Activated CD4-positive, alpha-beta memory T cell treated with anti-CD3 and anti-CD28 coated beads for 36 hours (primary cell): ENCODE measurements at regions of chrX and their contacts with region 1.

Region 1: DNA sequence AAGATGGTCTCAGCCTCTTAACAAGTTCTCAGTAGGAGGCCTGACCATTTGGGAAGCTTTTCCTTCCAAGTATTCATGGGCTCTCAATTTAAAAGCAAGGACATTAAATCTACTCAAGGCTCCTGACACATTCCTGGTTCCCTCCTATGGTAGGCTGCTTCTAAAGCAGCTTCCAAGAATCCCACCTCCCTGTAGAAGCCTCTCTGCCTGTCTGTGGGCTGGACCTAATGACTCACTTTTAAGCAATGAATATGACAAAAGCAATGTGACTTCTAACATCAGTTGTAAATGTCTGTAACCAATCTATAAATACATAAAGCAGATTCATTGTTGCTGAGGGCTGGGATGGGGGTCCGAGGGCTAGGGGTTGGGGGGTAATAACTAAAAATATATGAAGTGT is 99.5 kb upstream of the FAM9B start:
- DNase-seq: no peak
- H3K4me3 Mint-ChIP-seq: no peak overlapping the region
- H3K27ac Mint-ChIP-seq: no peak overlapping the region
- H3K4me1 Mint-ChIP-seq: peaks cover 30% of the 10 kb centered on the region
- H3K27me3 Mint-ChIP-seq: no peaks in the 10 kb centered on the region

Region 2: DNA sequence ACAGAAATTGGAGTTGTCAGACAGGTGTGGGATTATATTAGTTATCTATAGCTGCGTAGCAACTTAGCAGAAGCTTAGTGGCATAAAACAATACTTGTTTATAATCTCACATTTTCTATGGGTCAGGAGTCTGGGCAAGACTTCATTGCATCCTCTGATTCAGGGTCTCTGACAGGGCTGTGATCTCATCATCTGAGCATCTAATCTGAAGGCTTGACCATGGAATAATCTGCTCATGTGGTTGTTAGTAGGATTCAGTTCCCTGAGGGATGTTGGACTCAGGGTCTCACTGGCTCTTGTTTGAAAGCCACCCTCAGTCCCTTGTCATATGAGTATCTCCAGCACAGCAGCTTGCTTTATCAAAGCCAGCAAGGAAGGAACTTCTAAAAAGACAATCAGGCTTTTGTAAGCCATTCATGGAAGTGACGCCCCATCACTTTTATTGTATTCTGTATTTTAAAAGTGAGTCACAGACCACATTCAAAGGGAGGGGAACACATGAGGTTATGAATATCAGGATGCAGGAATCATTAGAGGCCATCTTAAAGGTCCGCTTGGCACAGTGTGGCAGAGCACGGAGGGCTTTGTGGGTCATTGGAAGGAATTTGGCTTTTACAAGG is 62.3 kb before region 1 on chrX:
- CTCF ChIA-PET with region 1: no interaction called
- POLR2A ChIA-PET with region 1: no interaction called
- intact Hi-C with region 1: loop called (anchors 10 kb)
- DNase-seq: no peak
- H3K4me3 Mint-ChIP-seq: no peak overlapping the region
- H3K27ac Mint-ChIP-seq: no peak overlapping the region
- H3K4me1 Mint-ChIP-seq: peaks cover 18% of the 10 kb centered on the region
- H3K27me3 Mint-ChIP-seq: peaks cover 2% of the 10 kb centered on the region

Region 3: DNA sequence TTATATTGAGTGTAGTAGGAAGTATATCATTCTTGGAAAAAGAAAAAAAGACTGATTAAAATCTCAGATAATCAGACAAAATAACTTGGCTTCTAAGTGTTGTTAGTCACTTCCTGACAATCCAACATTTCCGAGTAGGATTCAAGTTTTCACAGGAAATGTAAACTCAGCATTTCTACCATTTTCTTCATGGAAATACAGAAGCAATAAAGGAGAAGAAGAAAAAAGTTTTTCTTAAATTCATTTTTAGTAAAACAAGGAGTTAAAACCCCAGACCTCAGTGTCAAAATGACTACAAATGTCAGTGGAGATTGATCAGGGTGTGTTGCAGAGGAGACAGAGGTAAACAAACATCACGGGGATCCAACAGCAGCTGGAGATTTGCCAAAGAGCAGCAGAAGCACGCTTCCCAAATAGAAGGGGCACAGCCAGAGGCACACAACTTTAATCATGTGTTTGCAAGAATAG is 29.8 kb after region 1 on chrX:
- CTCF ChIA-PET with region 1: no interaction called
- POLR2A ChIA-PET with region 1: interaction called, 3 read pairs
- intact Hi-C with region 1: loop called (anchors 2 kb)
- DNase-seq: no peak
- H3K4me3 Mint-ChIP-seq: no peak overlapping the region
- H3K27ac Mint-ChIP-seq: peak overlapping the region; percentile 33
- H3K4me1 Mint-ChIP-seq: peaks cover 44% of the 10 kb centered on the region
- H3K27me3 Mint-ChIP-seq: no peaks in the 10 kb centered on the region

Region 4: DNA sequence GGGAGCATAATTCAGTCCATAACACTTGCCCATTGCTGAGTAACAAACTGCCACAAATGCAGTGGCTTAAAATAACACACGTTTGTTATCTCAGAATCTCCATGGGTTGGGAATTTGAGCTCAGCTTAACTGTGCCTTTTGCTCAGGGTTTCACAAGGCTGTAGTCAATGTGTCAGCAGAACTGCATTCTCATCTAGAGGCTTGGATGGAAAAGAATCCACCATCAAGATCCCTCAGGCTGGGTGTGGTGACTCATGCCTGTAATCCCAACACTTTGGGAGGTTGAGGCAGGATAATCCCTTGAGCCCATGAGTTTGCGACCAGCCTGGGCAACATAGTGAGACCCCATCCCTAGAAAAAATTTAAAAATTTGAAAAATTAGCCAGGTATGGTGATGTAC is 305.6 kb after region 1 on chrX:
- CTCF ChIA-PET with region 1: no interaction called
- POLR2A ChIA-PET with region 1: no interaction called
- intact Hi-C with region 1: no loop called
- DNase-seq: no peak
- H3K4me3 Mint-ChIP-seq: no peak overlapping the region
- H3K27ac Mint-ChIP-seq: no peak overlapping the region
- H3K4me1 Mint-ChIP-seq: peaks cover 10% of the 10 kb centered on the region
- H3K27me3 Mint-ChIP-seq: no peaks in the 10 kb centered on the region